ENCODE measurements at regions of chr22 and their contacts with region 1.

Region 1: DNA sequence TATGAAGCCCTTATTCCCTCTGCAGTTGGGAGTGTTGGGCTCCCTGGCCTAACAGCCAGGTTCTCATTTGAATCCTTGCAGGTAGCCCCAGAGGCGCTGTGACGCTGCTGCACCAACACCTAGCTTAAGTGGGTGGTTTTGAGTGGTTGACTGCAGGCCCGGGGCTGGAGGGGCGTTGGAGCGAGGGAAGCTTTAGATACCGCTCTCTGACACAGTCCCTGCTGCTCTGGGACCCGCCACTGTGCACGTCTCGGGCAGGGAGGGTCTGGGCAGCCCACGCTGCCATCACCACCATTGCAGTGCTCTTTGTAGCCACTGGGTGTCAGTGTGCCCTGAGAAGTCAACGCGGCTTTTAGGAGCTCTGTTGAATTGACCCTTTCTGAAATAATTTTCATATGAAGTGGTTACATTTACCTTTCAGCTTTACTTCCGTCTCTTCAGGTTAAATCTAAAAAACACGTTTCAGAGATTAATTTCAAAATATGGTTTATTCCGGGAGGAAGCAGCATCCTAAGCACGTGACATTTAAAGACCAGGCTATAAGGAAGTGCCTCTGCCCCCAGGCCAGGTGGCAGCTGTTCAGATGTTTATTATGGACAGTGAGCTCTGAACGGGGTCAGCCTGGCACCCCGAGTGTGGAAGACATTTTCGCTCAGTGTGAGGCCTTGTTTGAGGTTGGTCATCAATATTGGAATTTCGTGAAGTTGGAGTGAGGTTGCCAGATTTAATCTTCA is 30.9 kb upstream of the PARVB start:
- DNase-seq: peak in 1 of 3 donors; percentile 36
- ATAC-seq: peak; percentile 74 to 86 (median 79)
- H3K4me3 ChIP-seq: no peak overlapping the region
- H3K27ac ChIP-seq: no peak overlapping the region
- H3K4me1 ChIP-seq: peaks cover 0 to 5% (median 2%) of the 10 kb centered on the region in 4 donors
- H3K27me3 ChIP-seq: no peaks in the 10 kb centered on the region
- CTCF ChIP-seq: peak; percentile 83 to 96 (median 92)
- POLR2A ChIP-seq: no peak

Region 2: GRCh38 chr22:44074337-44074984 is 81.3 kb after region 1 on chr22:
- intact Hi-C with region 1: loop called in 1 of 2 experiments (anchors 10 kb)
- DNase-seq: no peak
- ATAC-seq: peak in 1 of 4 donors; percentile 15
- H3K4me3 ChIP-seq: no peak overlapping the region
- H3K27ac ChIP-seq: no peak overlapping the region
- H3K4me1 ChIP-seq: no peaks in the 10 kb centered on the region
- H3K27me3 ChIP-seq: no peaks in the 10 kb centered on the region
- CTCF ChIP-seq: no peak
- POLR2A ChIP-seq: no peak

Region 3: GRCh38 chr22:44080936-44081861 is 88.0 kb after region 1 on chr22:
- intact Hi-C with region 1: loop called (anchors 10 kb)
- DNase-seq: peak; percentile 69 to 74 (median 69)
- ATAC-seq: peak; percentile 65 to 80 (median 66)
- H3K4me3 ChIP-seq: no peak overlapping the region
- H3K27ac ChIP-seq: no peak overlapping the region
- H3K4me1 ChIP-seq: no peaks in the 10 kb centered on the region
- H3K27me3 ChIP-seq: no peaks in the 10 kb centered on the region
- CTCF ChIP-seq: peak; percentile 59 to 92 (median 87)
- POLR2A ChIP-seq: no peak

Region 4: DNA sequence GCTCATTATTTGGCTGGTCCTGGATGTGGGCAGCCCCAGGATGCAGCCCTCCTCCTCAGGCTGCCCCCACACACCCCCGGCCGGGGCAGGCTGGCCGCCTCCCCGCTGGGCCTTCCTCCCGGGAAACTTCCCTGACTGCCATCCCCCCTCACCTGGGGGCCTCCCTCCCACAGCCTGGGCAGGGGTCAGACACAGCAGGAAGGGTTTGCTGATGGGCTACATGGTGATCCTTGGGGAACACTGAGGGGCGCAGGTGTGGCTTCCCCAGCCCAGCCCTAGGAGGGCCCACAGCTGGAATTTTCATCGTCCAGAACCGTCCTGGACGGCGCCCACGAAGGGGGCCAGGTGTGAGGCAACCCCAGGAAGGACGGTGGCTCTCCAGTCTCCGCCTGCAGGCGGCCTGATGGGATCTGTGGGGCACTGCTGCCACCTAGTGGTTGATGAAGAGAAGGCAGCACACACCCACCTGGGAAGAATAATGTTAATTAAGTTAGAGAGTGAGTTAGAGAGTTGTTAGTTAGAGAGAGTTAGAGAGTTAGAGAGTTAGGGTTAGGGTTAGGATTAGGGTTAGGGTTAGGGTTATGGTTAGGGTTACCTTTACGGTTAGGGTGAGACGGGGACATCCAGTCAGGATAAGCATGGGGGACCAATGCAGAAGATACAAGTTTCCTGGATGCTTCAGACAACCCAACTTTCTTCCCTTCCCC is 632.9 kb after region 1 on chr22:
- intact Hi-C with region 1: loop called (anchors 5 kb)
- DNase-seq: peak; percentile 69 to 78 (median 70)
- ATAC-seq: peak; percentile 80 to 96 (median 90)
- H3K4me3 ChIP-seq: no peak overlapping the region
- H3K27ac ChIP-seq: no peak overlapping the region
- H3K4me1 ChIP-seq: no peaks in the 10 kb centered on the region
- H3K27me3 ChIP-seq: no peaks in the 10 kb centered on the region
- CTCF ChIP-seq: peak; percentile 96 to 99 (median 97)
- POLR2A ChIP-seq: no peak